ENCODE measurements at regions of chr16 and their contacts with region 1.

Region 1: DNA sequence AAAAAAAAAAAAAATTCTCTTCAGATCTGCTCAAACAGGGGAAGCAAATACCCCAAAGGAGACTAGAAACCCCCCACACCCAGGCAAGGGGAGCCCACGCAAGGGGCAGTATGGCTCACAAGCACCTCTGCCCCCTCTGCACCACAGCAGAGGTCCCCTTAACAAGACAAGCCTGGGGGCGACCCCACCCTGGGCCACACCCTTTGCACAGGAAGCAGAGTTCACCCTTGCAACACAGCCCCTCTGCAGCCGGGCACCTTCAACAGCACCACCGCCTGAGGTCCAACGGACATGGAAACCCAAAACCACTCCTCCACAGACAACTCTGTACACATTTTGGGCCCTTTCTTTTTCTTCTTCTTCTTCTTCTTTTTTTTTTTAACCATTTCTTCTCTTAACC is 12.8 kb downstream of the AXIN1 start:
- DNase-seq: peak in 1 of 2 donors; percentile 74
- ATAC-seq: no peak
- H3K4me3 ChIP-seq: no peak overlapping the region
- H3K27ac ChIP-seq: no peak overlapping the region
- H3K4me1 ChIP-seq: no peaks in the 10 kb centered on the region
- H3K27me3 ChIP-seq: no peaks in the 10 kb centered on the region

Region 2: DNA sequence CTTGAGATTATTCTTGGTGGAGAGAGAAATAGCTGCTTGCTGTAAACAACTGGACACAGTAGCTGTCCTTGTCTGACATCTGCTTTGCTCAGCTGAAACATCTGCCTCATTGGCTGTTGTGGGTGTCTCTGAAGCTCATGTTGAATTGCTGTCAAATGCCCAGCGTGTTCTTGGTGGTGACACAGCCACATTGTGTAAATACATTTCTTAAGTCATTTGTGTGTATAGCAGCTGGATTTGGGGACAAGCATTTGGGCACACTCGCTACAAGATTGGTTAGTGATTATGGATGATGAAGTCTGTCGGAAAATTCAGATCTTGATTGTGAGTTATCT is 99.8 kb before region 1 on chr16:
- intact Hi-C with region 1: loop called in 1 of 2 experiments (anchors 10 kb)
- DNase-seq: no peak
- ATAC-seq: no peak
- H3K4me3 ChIP-seq: no peak overlapping the region
- H3K27ac ChIP-seq: no peak overlapping the region
- H3K4me1 ChIP-seq: no peaks in the 10 kb centered on the region
- H3K27me3 ChIP-seq: no peaks in the 10 kb centered on the region